ENCODE measurements at regions of chr3 and their contacts with region 1.

Region 1: DNA sequence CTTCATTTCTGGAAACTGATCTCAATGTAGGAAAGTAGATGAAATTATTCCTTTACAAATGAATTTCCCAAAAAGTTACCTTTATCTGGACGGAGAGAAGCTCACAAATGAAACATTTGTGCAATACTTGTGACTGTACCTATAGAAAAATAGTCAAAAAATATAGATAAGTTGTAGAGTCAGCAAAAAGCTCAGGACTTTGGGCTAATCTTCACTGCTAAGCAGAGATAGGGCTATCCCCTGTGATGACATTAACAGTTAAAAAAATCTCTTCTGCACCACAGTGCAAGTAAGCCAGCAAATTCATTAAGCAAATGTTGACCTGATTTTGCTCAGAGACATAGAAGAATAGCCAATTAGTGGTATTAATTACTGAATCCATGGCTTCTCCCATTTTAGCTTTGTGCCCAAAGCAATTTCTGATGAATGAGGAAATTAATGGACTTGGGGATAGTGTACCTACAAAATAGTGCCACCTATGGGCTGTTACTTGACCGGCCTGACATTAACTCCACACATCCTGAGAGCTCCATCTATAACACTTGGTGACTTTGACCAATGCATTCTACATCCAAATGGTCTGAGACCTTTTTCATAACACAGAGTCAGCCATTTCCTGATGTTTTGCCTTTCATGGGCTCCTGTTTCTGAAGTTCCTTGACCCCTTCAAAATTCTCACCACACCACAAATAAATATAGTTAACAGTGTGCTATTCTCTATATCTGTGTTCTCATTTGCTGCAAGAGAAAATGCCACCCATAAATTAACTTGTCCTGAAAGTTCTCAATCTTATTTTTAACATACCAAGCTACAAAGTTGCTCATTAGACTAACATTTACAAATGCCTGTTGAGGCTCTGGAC is 105.0 kb downstream of the SSR3 start:
- DNase-seq: no peak
- ATAC-seq: peak; percentile 60 to 62
- H3K4me3 ChIP-seq: no peak overlapping the region
- H3K27ac ChIP-seq: no peak overlapping the region
- H3K4me1 ChIP-seq: no peaks in the 10 kb centered on the region
- H3K27me3 ChIP-seq: no peaks in the 10 kb centered on the region

Region 2: GRCh38 chr3:156509189-156510174 is 59.5 kb after region 1 on chr3:
- intact Hi-C with region 1: loop called in 1 of 4 experiments (anchors 5 kb)
- DNase-seq: no peak
- ATAC-seq: peak; percentile 57 to 67
- H3K4me3 ChIP-seq: no peak overlapping the region
- H3K27ac ChIP-seq: no peak overlapping the region
- H3K4me1 ChIP-seq: no peaks in the 10 kb centered on the region
- H3K27me3 ChIP-seq: no peaks in the 10 kb centered on the region

Region 3: GRCh38 chr3:157064402-157064801 is 614.5 kb after region 1 on chr3:
- intact Hi-C with region 1: no loop called
- DNase-seq: peak in 1 of 3 donors; percentile 39
- ATAC-seq: peak in 1 of 2 donors; percentile 38
- H3K4me3 ChIP-seq: no peak overlapping the region
- H3K27ac ChIP-seq: no peak overlapping the region
- H3K4me1 ChIP-seq: no peaks in the 10 kb centered on the region
- H3K27me3 ChIP-seq: no peaks in the 10 kb centered on the region